GM10248 (cell line): ENCODE measurements at regions of chr5 and their contacts with region 1.

Region 1: GRCh38 chr5:73638344-73639095 is 12.5 kb downstream of the ARHGEF28 start:
- DNase-seq: no peak
- CTCF ChIP-seq: no peak

Region 2: GRCh38 chr5:73654171-73654811 is 15.8 kb after region 1 on chr5:
- CTCF ChIA-PET with region 1: interaction called, 16 read pairs
- POLR2A ChIA-PET with region 1: no interaction called
- DNase-seq: peak; percentile 34
- CTCF ChIP-seq: no peak

Region 3: DNA sequence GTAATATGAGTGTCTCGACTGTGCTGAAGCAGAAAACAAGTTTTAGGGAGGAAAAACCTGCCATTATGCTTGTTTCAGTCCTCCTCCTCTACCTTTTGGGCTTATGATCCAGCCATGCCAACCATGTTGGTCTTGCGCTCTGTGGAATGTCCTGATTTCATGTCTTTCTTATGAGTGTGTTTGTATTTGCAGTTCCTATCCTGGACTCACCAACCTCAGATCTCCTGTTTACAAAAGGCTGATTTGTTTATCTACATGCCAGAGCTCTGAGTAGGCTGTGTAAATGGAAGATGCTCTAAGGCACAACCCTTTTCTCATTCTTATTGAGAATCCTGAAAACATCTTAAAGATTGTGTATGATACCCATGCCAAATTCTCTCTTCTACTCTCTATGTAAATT is 126.1 kb after region 1 on chr5:
- CTCF ChIA-PET with region 1: no interaction called
- POLR2A ChIA-PET with region 1: no interaction called
- DNase-seq: no peak
- CTCF ChIP-seq: no peak